Stomach (tissue), 19 donors: ENCODE measurements at regions of chr9 and their contacts with region 1.

Region 1: DNA sequence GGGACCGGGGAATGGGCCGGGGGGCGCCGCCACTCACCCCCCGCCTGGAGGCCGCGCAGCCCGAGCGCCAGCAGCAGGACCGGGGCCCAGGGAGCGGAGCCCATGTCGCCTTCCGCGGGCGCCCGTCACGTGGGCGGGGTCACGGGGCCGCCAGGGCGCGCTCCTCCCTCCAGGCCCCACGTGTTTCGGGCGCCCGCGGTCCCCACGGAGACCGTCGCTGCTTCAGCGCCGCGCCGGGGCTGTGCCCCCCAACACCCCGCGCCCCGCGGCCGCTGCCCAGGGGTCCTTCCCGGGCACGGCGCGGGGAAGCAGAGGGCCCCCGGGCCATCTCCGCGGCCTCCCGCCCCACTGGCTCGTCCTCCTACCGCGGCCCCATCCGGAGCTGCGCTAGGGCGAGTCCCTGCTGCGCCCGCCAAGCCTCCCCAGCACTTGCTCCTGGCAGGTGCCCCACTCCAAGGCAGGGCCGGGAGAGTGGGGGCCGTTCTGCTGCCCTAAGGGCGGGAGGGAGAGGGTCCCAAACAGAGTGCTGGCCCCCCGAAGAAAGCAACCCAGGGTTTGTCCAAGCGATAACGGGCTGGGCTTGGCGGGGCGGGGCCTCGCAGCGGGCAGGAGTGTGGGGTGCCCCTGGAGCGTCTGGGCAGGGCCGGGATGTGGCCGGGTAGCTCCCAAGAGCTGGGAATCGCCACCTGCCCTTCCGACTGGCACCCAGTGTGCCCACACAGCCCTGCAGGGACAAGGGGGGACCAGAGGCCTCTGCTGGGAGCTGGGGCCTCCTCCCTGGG is at the start of gene DPP7:
- DNase-seq: peak; percentile 76 to 86
- H3K4me3 ChIP-seq: peak within 1 kb of the TSS; percentile 76 to 83 (median 78)
- H3K27ac ChIP-seq: peak within 1 kb of the TSS in 4 of 5 donors; percentile 5 to 67 (median 48)
- H3K4me1 ChIP-seq: peaks cover 8 to 26% (median 22%) of the 10 kb centered on the region in 4 donors
- H3K27me3 ChIP-seq: peaks cover 0 to 28% (median 0%) of the 10 kb centered on the region in 3 donors
- CTCF ChIP-seq: no peak
- EP300 ChIP-seq: no peak
- POLR2A ChIP-seq: no peak
- total RNA-seq, gene DPP7: 25.9 to 251 (median 103) TPM

Region 2: DNA sequence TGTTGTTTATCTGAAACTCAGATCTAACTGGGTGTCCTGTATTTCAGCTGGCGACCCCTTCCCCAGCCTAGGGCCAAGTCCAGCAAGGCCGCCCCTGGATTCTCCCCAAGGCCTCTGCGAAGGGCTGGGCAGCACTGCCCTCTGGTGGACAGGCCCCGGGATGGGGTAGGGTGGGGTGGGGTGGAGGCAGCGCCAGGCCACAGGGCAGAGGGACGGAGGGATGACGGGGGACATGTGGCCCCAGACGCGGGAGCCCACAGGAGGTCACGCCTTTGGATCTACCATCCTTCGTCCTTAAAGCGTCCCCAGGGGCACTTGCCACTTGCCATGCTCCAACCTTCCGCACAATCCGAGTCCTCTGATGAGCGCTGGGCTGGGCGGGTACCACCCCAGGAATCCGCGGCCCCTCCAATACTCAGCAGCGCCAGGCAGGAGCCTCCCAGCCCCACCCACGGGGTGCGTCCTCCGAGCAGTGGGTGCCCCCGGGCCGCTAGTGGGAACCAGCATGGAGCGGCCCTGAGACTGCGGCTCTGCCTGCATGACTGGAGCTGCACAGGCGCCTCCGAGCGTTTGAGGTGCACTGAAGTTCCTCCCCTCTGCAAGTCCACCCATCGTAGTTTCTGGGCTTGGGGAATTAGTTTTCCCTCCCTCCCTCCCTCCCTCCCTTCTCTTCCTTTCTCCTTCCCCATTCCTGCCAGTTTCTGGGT is 420.4 kb before region 1 on chr9:
- intact Hi-C with region 1: no loop called
- DNase-seq: peak; percentile 79 to 85
- H3K4me3 ChIP-seq: no peak overlapping the region
- H3K27ac ChIP-seq: peak overlapping the region; percentile 57 to 82 (median 73)
- H3K4me1 ChIP-seq: peaks cover 61 to 83% (median 72%) of the 10 kb centered on the region in 4 donors
- H3K27me3 ChIP-seq: peaks cover 0 to 5% (median 0%) of the 10 kb centered on the region in 3 donors
- CTCF ChIP-seq: peak in 5 of 7 experiments; percentile 37 to 81 (median 62)
- EP300 ChIP-seq: no peak
- POLR2A ChIP-seq: no peak

Region 3: DNA sequence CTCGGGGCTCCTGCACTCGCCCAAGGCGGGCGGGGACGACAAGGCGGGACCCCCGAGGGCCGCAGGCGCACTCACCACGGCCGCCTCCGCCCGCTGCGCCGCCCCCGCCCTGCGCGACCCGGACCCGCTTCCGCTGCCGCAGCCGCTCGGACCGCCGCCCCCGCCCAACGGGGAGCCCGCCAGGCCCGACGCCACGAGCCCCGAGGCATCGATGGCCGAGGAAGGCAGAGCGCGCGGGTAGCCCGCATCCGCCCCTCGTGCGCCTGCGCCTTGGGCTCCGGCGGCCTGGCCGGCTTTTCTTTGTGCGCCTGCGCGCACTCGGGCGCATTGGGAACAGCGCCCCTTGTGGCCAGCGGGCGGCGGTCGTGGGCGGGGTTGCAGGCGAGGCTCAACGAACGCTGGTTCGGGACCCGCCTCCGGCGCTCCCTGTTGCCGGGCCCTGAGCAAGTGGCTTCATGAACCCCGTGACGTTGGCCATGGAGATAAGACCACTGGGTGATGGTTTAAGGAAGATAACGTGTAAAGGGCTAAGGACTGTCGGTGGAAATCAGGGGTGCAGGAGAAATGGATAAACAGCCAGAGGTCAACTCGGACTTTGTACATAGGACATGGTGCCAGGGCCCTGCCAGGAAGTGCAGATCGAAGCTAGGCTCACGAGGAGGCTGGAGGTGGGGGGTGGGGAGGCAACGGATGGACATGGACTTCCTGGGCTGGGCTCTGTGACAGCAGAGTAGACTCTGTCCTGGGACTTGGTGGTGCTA is 170.1 kb before region 1 on chr9 and contains the starts of genes C8G and FBXW5:
- intact Hi-C with region 1: no loop called
- DNase-seq: peak; percentile 95 to 98
- H3K4me3 ChIP-seq: peak within 1 kb of the TSS; percentile 84 to 99 (median 91)
- H3K27ac ChIP-seq: peak within 1 kb of the TSS; percentile 80 to 96 (median 87)
- H3K4me1 ChIP-seq: peaks cover 35 to 58% (median 56%) of the 10 kb centered on the region in 4 donors
- H3K27me3 ChIP-seq: no peaks in the 10 kb centered on the region
- CTCF ChIP-seq: peak in 6 of 7 experiments; percentile 86 to 100 (median 96)
- EP300 ChIP-seq: no peak
- POLR2A ChIP-seq: no peak
- total RNA-seq, gene C8G: not detected
- total RNA-seq, gene FBXW5: 47.7 to 435 (median 174) TPM

Region 4: GRCh38 chr9:137029058-137029936 is 85.5 kb before region 1 on chr9:
- intact Hi-C with region 1: no loop called
- DNase-seq: peak; percentile 84 to 85
- H3K4me3 ChIP-seq: peak overlapping the region; percentile 57 to 69 (median 64)
- H3K27ac ChIP-seq: peak overlapping the region; percentile 54 to 81 (median 64)
- H3K4me1 ChIP-seq: peaks cover 40 to 75% (median 60%) of the 10 kb centered on the region in 4 donors
- H3K27me3 ChIP-seq: peaks cover 0 to under 1% (median 0%) of the 10 kb centered on the region in 3 donors
- CTCF ChIP-seq: peak in 6 of 7 experiments; percentile 37 to 94 (median 88)
- EP300 ChIP-seq: no peak
- POLR2A ChIP-seq: no peak

Region 5: DNA sequence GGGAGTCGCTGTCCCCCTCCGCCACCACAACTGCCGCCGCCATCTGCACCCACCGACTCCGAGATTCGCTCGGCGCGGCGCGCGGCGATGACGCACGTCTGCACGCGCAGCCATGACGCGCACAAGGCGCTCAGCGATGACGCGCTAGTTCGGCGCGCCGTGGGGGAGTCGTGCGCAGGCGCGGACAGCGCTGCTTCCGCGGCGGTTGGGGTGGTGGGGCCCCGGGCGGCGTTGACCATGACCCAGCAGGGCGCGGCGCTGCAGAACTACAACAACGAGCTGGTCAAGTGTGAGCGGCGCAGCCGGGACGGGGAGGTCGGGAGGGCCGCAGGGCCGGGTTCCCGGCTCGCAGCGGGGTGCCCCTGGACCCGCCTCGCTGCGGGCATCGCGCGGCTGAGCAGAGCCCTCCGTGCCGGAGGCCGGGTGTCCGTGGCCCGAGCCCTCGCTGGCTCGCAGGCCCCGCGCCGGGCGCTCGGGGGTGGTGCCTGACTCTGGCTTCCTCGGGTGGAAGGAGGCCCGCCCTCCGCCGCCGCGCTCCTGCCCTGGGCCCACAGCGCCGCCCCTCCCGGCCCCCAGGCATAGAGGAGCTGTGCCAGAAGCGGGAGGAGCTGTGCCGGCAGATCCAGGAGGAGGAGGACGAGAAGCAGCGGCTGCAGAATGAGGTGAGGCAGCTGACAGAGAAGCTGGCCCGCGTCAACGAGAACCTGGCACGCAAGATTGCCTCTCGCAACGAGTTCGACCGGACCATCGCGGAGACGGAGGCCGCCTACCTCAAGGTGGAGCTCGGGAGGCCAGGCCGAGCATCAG is 73.9 kb after region 1 on chr9 and contains the starts of genes ANAPC2 and SSNA1:
- intact Hi-C with region 1: loop called (anchors 10 kb)
- DNase-seq: peak; percentile 95 to 98
- H3K4me3 ChIP-seq: peak within 1 kb of the TSS; percentile 95 to 99 (median 97)
- H3K27ac ChIP-seq: peak within 1 kb of the TSS; percentile 96 to 97 (median 96)
- H3K4me1 ChIP-seq: peaks cover 35 to 83% (median 77%) of the 10 kb centered on the region in 4 donors
- H3K27me3 ChIP-seq: no peaks in the 10 kb centered on the region
- CTCF ChIP-seq: peak in 3 of 7 experiments; percentile 6 to 48 (median 31)
- EP300 ChIP-seq: no peak
- POLR2A ChIP-seq: peak in 2 of 4 donors; percentile 56
- total RNA-seq, gene ANAPC2: 35.8 to 147 (median 42.9) TPM
- total RNA-seq, gene SSNA1: 28.1 to 154 (median 81.4) TPM

Region 6: GRCh38 chr9:137227063-137227852 is 112.5 kb after region 1 on chr9 and contains the start of gene RNF224:
- intact Hi-C with region 1: loop called (anchors 5 kb)
- DNase-seq: peak; percentile 93 to 97
- H3K4me3 ChIP-seq: peak within 1 kb of the TSS in 1 of 4 donors; percentile 22
- H3K27ac ChIP-seq: peak within 1 kb of the TSS; percentile 75 to 98 (median 81)
- H3K4me1 ChIP-seq: peaks cover 31 to 63% (median 61%) of the 10 kb centered on the region in 4 donors
- H3K27me3 ChIP-seq: peaks cover 3 to 59% (median 40%) of the 10 kb centered on the region in 3 donors
- CTCF ChIP-seq: peak in 5 of 7 experiments; percentile 84 to 98 (median 91)
- EP300 ChIP-seq: no peak
- POLR2A ChIP-seq: no peak
- total RNA-seq, gene RNF224: not detected